ENCODE measurements at regions of chr3 and their contacts with region 1.

Region 1: DNA sequence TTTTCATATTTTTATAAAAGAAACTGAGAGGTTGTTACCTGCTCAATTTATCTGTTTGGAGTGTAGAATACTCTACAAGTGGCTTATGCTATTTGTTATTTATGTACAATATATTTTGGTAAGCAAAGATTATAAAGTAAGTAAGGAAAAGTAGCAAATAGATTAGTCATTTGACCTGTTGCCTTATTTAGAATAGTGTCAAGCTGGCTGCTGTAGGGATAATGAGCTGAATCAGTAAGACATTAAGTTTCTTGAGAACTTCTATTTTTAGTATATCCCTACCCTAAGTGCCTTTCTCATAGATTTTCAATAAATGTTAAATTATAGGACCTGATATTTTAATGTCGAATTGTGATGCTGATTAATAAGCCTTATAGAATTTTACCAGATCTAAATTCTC is 37.2 kb downstream of the ECT2 start:
- DNase-seq: peak; percentile 38
- H3K4me3 ChIP-seq: no peak overlapping the region
- H3K27ac ChIP-seq: no peak overlapping the region
- H3K4me1 ChIP-seq: peaks cover 7% of the 10 kb centered on the region
- H3K27me3 ChIP-seq: no peaks in the 10 kb centered on the region
- CTCF ChIP-seq: no peak
- POLR2A ChIP-seq: no peak

Region 2: DNA sequence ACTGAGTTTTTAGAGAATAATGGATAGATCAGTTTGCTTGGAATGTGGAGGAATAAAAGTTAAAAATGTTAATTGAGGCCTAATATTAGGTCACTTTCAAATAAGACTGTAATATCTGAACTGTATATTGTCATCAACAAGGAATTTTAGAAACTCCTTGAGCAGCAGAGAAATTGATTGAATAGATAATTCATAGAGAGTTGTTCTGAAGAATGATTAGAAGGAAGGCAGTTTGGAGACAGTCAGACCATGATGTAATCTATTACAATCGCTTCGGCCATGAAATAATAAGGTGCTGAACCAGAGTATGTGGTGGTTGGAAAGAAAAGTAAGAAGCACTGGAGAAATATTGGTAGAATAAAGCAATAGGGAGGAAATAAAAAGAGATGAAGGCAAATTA is 21.5 kb before region 1 on chr3:
- CTCF ChIA-PET with region 1: no interaction called
- POLR2A ChIA-PET with region 1: interaction called, 5 read pairs
- dilution Hi-C with region 1: no loop called
- intact Hi-C with region 1: loop called (anchors 2 kb)
- DNase-seq: no peak
- H3K4me3 ChIP-seq: no peak overlapping the region
- H3K27ac ChIP-seq: no peak overlapping the region
- H3K4me1 ChIP-seq: no peaks in the 10 kb centered on the region
- H3K27me3 ChIP-seq: no peaks in the 10 kb centered on the region
- CTCF ChIP-seq: no peak
- POLR2A ChIP-seq: no peak

Measured in endothelial cell of umbilical vein (primary cell).